Activated CD4-positive, alpha-beta T cell treated with anti-CD3 and anti-CD28 coated beads, Interleukin-2, amount 10 ng/mL, durations not matched to agents 24 days and 14 days (primary cell): ENCODE measurements at regions of chr9 and their contacts with region 1.

Region 1: GRCh38 chr9:113221003-113221799 is at the starts of genes FKBP15 and SLC31A1:
- DNase-seq: peak; percentile 99
- H3K4me3 Mint-ChIP-seq: peak within 1 kb of the TSS; percentile 94
- H3K27ac Mint-ChIP-seq: peak within 1 kb of the TSS; percentile 94
- H3K4me1 Mint-ChIP-seq: peaks cover 53% of the 10 kb centered on the region
- H3K27me3 Mint-ChIP-seq: no peaks in the 10 kb centered on the region
- total RNA-seq, gene FKBP15: 33.9 and 36.7 TPM in 2 replicates
- total RNA-seq, gene SLC31A1: 18.6 and 20.0 TPM in 2 replicates

Region 2: DNA sequence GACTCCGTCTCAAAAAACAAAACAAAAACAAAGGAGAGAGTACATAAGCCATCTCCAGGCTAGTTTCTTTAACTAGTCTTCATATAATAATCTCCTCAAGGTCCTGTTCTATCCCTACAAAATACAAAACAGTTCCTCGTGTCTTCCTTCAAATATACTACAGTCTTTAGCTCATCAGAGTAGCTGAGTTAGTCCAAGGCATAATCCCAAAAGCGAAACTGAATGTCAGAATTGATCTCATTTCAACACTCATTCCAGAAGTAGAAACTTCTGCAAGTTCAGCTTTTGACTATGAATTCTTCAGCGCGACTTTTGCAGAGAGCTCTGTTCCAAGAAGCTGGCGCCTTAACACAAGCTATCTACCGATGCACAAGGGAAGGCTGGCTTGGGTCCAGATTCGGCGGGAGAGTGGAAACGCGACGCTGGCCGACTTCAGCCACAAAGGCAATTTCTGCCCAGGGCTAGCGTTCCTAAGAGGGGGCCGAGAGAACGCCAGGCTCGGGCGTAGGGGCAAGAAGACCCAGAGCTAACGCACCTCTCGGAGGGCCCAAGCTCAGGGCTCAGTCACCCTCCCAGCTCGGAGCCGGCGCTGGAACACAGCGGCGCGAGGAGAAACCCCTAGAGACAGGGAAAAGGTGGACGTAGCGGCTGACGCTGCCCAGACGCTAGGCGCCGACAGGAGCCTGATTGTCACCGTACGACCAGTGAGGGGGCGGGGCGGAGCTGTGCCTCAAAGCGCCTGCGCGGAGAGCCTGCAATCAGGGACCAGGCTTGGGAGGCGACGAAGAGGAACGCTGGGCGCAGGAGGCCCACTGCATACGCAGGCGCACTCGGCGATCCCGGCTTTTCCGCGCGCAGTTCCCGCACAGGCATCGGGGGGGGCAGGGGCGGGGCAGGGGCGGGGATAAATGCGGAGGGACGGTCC is 841.8 kb before region 1 on chr9:
- intact Hi-C with region 1: loop called (anchors 2 kb)
- DNase-seq: peak; percentile 100
- H3K4me3 Mint-ChIP-seq: peak overlapping the region; percentile 100
- H3K27ac Mint-ChIP-seq: peak overlapping the region; percentile 100
- H3K4me1 Mint-ChIP-seq: peaks cover 42% of the 10 kb centered on the region
- H3K27me3 Mint-ChIP-seq: no peaks in the 10 kb centered on the region

Region 3: GRCh38 chr9:112750111-112750767 is 471.0 kb before region 1 on chr9 and contains the start of gene SNX30:
- intact Hi-C with region 1: loop called (anchors 5 kb)
- DNase-seq: peak; percentile 95
- H3K4me3 Mint-ChIP-seq: peak within 1 kb of the TSS; percentile 82
- H3K27ac Mint-ChIP-seq: peak within 1 kb of the TSS; percentile 86
- H3K4me1 Mint-ChIP-seq: peaks cover 51% of the 10 kb centered on the region
- H3K27me3 Mint-ChIP-seq: peaks cover 4% of the 10 kb centered on the region
- total RNA-seq, gene SNX30: 2.6 and 2.9 TPM in 2 replicates

Region 4: GRCh38 chr9:113340017-113340699 is 119.0 kb after region 1 on chr9 and contains the start of gene WDR31:
- intact Hi-C with region 1: loop called (anchors 5 kb)
- DNase-seq: peak; percentile 95
- H3K4me3 Mint-ChIP-seq: peak within 1 kb of the TSS; percentile 81
- H3K27ac Mint-ChIP-seq: peak within 1 kb of the TSS; percentile 78
- H3K4me1 Mint-ChIP-seq: peaks cover 43% of the 10 kb centered on the region
- H3K27me3 Mint-ChIP-seq: no peaks in the 10 kb centered on the region
- total RNA-seq, gene WDR31: 2.2 and 2.7 TPM in 2 replicates

Region 5: GRCh38 chr9:113401027-113401792 is 180.0 kb after region 1 on chr9 and contains the start of gene ALAD:
- intact Hi-C with region 1: loop called (anchors 1 kb)
- DNase-seq: peak; percentile 100
- H3K4me3 Mint-ChIP-seq: peak within 1 kb of the TSS; percentile 96
- H3K27ac Mint-ChIP-seq: peak within 1 kb of the TSS; percentile 90
- H3K4me1 Mint-ChIP-seq: peaks cover 23% of the 10 kb centered on the region
- H3K27me3 Mint-ChIP-seq: no peaks in the 10 kb centered on the region
- total RNA-seq, gene ALAD: 23.5 and 24.9 TPM in 2 replicates